Activated naive CD4-positive, alpha-beta T cell treated with anti-CD3 and anti-CD28 coated beads for 36 hours (primary cell): ENCODE measurements at regions of chr12 and their contacts with region 1.

Region 1: DNA sequence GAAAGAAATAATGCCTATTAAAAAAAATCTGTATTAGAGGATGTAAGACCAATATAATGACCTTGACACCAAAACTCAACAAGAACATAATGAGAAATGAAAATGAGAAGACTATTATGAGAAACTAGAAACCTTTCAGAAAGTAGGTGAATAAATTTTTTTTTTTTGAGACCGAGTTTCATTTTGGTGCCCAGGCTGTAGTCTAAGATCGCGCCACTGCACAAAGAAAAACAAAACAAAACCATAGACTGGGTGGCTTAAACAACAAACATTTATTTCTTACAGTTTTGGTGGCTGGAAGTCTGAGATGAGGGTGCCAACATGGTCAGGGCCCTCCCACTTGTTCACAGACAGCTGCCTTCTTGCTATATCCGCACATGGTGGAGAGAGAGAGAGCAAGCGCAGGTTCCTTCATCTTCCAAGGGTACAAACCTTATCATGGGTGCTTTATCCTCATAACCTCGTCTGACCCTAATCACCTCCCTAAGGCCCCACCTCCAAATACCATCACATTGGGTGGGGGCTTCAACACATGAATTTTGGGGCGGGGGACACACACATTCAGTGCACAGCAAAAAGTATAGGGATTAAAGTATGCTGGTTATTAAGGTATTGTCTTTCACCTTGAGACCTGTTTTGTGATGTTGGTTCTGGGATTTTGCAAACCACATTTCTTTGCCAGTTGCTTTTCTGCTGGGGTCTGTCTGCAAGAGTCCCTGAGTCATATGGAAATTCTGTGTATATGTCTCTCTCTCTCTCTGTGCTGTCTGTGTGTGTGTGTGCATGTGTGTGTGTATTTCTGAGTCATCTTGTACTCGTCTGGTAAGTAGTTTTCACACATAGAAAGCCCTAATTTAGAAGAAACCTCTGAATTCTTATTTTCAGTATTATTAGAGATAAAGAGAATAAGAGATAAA is 26.2 kb downstream of the ZCRB1 start:
- DNase-seq: peak; percentile 91
- H3K4me3 Mint-ChIP-seq: no peak overlapping the region
- H3K27ac Mint-ChIP-seq: peak overlapping the region; percentile 36
- H3K4me1 Mint-ChIP-seq: peaks cover 14% of the 10 kb centered on the region
- H3K27me3 Mint-ChIP-seq: no peaks in the 10 kb centered on the region

Region 2: DNA sequence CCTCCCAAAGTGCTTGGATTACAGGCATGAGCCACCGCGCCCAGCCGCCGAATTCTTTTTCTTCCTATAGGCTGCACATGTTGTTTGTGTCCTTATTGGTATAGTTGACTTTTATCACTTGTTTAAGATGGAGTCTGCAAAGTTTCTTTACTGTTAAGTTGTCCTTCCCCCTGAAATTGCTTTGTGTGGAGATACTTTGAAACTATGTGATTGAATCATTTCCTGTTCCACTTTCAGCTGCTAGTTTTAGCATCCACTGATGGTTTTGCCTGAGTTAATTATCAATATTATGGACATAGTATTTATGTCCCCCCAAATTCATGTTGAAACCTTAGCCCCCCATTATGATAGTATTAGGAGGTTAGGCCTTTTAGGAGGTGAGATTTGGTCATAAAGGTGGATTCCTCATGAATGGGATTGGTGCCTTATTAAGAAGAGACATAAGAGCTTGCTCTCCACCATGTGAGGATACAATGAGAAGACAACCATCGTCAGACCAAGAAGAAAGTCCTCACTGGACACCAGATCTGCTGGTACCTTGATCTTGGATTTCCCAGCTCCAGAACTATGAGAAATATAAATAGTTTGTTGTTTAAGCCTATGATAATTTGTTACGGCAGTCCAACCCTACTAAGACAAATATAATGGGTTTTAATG is 61.2 kb after region 1 on chr12:
- CTCF ChIA-PET with region 1: no interaction called
- intact Hi-C with region 1: loop called (anchors 1 kb)
- DNase-seq: no peak
- H3K4me3 Mint-ChIP-seq: no peak overlapping the region
- H3K27ac Mint-ChIP-seq: peak overlapping the region; percentile 65
- H3K4me1 Mint-ChIP-seq: peaks cover 51% of the 10 kb centered on the region
- H3K27me3 Mint-ChIP-seq: no peaks in the 10 kb centered on the region